ENCODE measurements at regions of chr4 and their contacts with region 1.

Region 1: GRCh38 chr4:94304365-94304971 is 38.2 kb downstream of the HPGDS start:
- DNase-seq: no peak
- ATAC-seq: peak in 3 of 4 donors; percentile 66 to 71 (median 66)
- H3K4me3 ChIP-seq: no peak overlapping the region
- H3K27ac ChIP-seq: no peak overlapping the region
- H3K4me1 ChIP-seq: peaks cover 0 to 3% (median 0%) of the 10 kb centered on the region in 3 donors
- H3K27me3 ChIP-seq: no peaks in the 10 kb centered on the region
- CTCF ChIP-seq: peak in 3 of 4 donors; percentile 37 to 49 (median 40)

Region 2: GRCh38 chr4:94390804-94391410 is 86.4 kb after region 1 on chr4:
- intact Hi-C with region 1: loop called in 1 of 3 experiments (anchors 10 kb)
- DNase-seq: no peak
- ATAC-seq: peak in 3 of 4 donors; percentile 44 to 49 (median 44)
- H3K4me3 ChIP-seq: no peak overlapping the region
- H3K27ac ChIP-seq: no peak overlapping the region
- H3K4me1 ChIP-seq: no peaks in the 10 kb centered on the region
- H3K27me3 ChIP-seq: no peaks in the 10 kb centered on the region
- CTCF ChIP-seq: peak in 2 of 4 donors; percentile 15 to 29